ENCODE measurements at regions of chr1 and their contacts with region 1.

Region 1: GRCh38 chr1:85276215-85276977 is at the start of gene BCL10:
- DNase-seq: peak; percentile 97
- H3K4me3 Mint-ChIP-seq: peak within 1 kb of the TSS; percentile 80
- H3K27ac Mint-ChIP-seq: peak within 1 kb of the TSS; percentile 87
- H3K4me1 Mint-ChIP-seq: peaks cover 46% of the 10 kb centered on the region
- H3K27me3 Mint-ChIP-seq: no peaks in the 10 kb centered on the region
- total RNA-seq, gene BCL10: 13.8 to 17.7 TPM

Region 2: DNA sequence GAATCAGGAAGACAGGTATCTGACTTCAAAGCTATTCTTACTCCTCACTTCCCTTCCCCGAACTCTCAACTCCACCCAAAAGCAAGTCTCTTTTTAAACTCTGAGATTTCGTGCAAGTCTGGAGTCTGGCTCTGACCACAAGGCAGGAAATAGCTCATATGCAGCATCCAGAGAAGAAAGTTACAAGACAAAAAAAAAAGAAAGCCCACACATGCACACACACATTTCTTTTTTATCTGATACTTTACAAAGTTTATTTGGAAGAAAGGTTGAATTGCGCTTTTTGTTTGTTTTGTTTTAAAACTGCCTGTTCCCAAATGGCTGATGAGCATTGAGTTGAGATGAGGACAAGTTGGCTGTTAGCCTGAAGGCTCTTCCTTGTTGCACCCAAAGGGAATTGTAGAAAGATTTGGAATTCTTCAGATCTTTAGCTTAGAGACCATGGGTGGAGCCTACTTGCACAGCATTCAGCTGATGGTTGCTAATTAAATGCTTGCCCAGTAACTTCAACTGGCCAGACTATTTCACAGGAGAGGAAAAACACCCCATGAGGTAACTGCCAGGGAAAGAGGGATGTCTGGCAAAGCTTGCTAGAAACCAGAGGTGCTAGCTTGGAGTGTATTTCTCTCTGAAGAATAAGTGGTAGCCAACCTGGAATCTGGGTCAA is 1767.8 kb before region 1 on chr1:
- CTCF ChIA-PET with region 1: no interaction called
- intact Hi-C with region 1: loop called (anchors 10 kb)
- DNase-seq: peak; percentile 68
- H3K4me3 Mint-ChIP-seq: peak overlapping the region; percentile 46
- H3K27ac Mint-ChIP-seq: peak overlapping the region; percentile 91
- H3K4me1 Mint-ChIP-seq: peaks cover 46% of the 10 kb centered on the region
- H3K27me3 Mint-ChIP-seq: no peaks in the 10 kb centered on the region

Region 3: GRCh38 chr1:84298328-84298683 is 978.1 kb before region 1 on chr1:
- CTCF ChIA-PET with region 1: no interaction called
- intact Hi-C with region 1: loop called (anchors 10 kb)
- DNase-seq: peak; percentile 54
- H3K4me3 Mint-ChIP-seq: peak overlapping the region; percentile 81
- H3K27ac Mint-ChIP-seq: peak overlapping the region; percentile 28
- H3K4me1 Mint-ChIP-seq: peaks cover 35% of the 10 kb centered on the region
- H3K27me3 Mint-ChIP-seq: no peaks in the 10 kb centered on the region

Region 4: DNA sequence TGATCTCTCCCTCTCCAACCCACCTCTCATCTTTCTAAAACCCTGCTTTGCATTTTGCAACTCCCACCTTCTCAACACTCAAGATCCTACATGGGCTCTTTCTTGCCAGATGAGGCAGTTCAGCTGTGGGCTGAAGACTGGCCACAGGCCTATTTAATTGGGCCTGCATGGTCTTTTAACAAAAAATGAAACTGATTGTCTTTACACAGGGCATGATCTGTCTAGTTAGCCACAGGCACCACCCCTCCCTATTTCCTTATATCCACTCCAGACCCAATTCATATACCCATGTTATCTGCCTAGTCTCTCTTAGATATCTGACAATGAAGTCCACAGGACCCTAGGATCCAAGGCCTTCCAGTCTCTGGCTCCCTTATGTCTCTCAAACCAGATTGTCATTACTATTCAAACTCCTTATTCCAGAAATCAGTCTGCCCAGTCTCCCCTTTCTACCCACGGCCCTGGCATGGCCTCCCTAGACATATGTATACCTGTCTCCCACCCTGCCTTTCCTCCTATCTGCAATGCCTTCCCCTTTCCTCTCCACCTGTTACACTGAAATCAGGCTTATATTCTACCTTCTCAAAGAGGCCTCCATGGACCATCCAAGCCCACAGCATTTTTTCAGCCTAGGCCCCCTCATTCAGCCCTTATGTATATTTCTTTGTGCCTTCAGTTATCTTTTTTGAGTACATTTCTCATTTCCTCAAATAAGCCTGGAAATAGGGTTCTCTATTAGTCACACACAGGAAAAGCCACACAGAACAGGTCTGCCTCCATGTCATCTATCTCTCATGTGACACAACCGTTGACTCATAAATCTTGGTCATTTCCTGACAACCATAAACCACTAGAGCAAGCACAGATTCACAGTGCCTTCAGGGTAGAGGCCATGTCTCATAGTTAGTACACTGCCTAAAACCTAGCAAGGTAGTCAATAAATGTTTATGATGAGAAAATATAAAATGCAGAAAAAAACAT is 422.4 kb before region 1 on chr1:
- CTCF ChIA-PET with region 1: no interaction called
- intact Hi-C with region 1: loop called (anchors 2 kb)
- DNase-seq: peak; percentile 64
- H3K4me3 Mint-ChIP-seq: no peak overlapping the region
- H3K27ac Mint-ChIP-seq: peak overlapping the region; percentile 80
- H3K4me1 Mint-ChIP-seq: peaks cover 35% of the 10 kb centered on the region
- H3K27me3 Mint-ChIP-seq: no peaks in the 10 kb centered on the region

Region 5: GRCh38 chr1:85153149-85153891 is 123.1 kb before region 1 on chr1:
- CTCF ChIA-PET with region 1: no interaction called
- intact Hi-C with region 1: no loop called
- DNase-seq: no peak
- H3K4me3 Mint-ChIP-seq: no peak overlapping the region
- H3K27ac Mint-ChIP-seq: no peak overlapping the region
- H3K4me1 Mint-ChIP-seq: peaks cover 16% of the 10 kb centered on the region
- H3K27me3 Mint-ChIP-seq: no peaks in the 10 kb centered on the region

Region 6: DNA sequence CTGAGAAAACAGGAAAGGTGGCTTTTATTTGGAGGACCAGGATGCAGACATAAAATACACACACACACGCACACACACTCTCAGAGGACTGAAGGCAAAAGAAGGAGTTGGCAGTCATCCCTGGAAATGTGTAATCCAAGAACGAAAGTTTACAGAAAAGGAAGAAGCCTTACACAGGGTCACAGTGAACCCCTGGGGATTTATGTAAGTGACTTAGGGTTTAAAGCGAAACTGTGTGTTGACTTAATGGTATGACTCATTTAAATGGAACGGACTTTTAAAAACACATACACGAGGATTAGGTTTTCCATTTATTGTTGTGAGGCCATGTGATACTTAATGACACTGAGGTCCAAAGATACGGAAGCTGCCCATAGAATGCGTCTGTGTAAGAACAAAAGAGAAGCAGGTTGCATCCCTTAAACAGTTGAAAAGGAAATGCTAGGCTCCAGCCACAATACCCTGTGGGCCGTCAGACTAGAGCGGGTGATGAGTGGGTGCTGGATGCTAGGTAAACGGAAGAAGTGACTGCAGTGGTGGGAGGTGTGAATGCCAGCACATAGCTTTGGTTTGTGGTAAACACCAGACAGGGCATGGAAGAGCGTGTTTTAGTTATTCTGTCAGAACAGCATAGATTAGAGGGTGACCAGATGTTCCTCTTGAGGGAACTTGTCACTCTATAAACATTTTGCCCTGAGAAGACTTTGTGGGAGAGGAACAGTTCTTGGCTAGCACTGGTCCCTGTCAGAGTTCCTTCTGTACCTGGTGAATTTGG is 21.6 kb after region 1 on chr1:
- CTCF ChIA-PET with region 1: no interaction called
- intact Hi-C with region 1: loop called (anchors 1 kb)
- DNase-seq: peak; percentile 83
- H3K4me3 Mint-ChIP-seq: peak overlapping the region; percentile 8
- H3K27ac Mint-ChIP-seq: peak overlapping the region; percentile 28
- H3K4me1 Mint-ChIP-seq: peaks cover 19% of the 10 kb centered on the region
- H3K27me3 Mint-ChIP-seq: peaks cover 8% of the 10 kb centered on the region

Region 7: DNA sequence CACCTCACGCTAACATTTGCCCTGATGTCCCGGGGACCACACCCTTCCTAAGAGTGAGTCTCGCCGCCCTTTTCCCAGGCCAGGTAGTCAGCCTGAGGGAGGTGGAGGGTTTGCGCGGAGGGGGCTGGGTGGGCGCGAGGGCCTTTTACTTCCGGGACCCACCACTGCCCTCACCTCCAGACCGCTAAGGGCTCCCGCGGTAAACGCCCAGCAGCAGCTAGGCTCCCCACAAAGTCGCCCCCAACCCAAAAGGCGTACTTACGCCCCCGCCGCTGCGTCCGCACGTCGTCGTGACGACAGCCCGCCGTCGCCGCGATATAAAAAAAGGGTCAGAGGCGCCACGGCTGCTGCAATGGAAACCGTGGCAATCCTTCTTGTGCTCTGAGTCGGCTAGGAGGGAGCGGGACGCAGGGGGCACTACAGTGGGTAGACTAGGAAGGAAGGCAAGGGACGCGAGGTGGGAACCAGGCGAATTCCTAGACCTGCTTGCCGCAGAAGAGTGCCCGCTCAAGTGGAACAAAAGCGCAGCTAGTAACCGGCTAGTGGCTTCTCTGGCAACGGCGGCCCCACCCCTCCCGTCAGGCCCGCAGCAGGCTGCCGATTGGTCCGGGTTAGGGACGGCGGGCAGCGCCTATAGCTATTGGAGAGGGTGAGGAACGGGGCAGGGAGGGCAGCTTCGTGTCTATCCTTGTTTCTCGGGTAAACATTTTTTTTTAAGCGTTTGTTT is 1119.5 kb after region 1 on chr1 and contains the start of gene ODF2L:
- CTCF ChIA-PET with region 1: no interaction called
- intact Hi-C with region 1: loop called (anchors 2 kb)
- DNase-seq: peak; percentile 94
- H3K4me3 Mint-ChIP-seq: peak within 1 kb of the TSS; percentile 95
- H3K27ac Mint-ChIP-seq: peak within 1 kb of the TSS; percentile 91
- H3K4me1 Mint-ChIP-seq: peaks cover 44% of the 10 kb centered on the region
- H3K27me3 Mint-ChIP-seq: no peaks in the 10 kb centered on the region
- total RNA-seq, gene ODF2L: 17.8 to 18.0 TPM

Region 8: GRCh38 chr1:87045761-87046304 is 1769.4 kb after region 1 on chr1:
- CTCF ChIA-PET with region 1: no interaction called
- intact Hi-C with region 1: loop called (anchors 10 kb)
- DNase-seq: peak; percentile 82
- H3K4me3 Mint-ChIP-seq: peak overlapping the region; percentile 33
- H3K27ac Mint-ChIP-seq: peak overlapping the region; percentile 79
- H3K4me1 Mint-ChIP-seq: peaks cover 45% of the 10 kb centered on the region
- H3K27me3 Mint-ChIP-seq: no peaks in the 10 kb centered on the region

Measured in activated naive CD4-positive, alpha-beta T cell treated with anti-CD3 and anti-CD28 coated beads for 36 hours (primary cell).